ENCODE measurements at regions of chr20 and their contacts with region 1.

Region 1: DNA sequence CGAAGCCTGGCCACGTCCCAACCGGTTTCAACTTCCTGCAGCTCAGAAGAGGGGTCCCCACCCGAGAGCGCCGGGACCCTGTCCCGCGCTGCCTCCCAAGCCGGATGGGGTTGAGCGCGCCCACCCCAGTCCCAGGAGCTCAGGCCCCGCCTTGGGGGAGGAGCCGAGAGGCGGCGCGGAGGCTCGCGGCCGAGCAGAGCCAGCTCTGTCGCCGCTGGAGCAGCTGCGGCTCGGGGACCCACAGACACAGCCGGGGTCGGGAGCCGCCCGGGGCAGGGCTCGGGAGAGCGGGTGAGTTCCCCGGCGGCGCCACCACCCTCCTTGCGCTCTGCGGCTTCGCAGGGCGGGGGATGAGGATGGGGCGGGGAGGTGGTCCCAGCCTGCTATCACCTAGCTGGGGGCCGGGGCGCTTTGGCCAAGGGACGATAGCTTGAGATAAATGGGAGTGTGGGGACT is at the start of gene PPP1R16B:
- DNase-seq: peak; percentile 90
- H3K4me3 ChIP-seq: peak within 1 kb of the TSS; percentile 98
- H3K27ac ChIP-seq: peak within 1 kb of the TSS; percentile 79
- H3K4me1 ChIP-seq: peaks cover 51% of the 10 kb centered on the region
- CTCF ChIP-seq: no peak
- total RNA-seq, gene PPP1R16B: 44.3 and 49.7 TPM in 2 replicates

Region 2: GRCh38 chr20:38842558-38842981 is 37.0 kb after region 1 on chr20:
- CTCF ChIA-PET with region 1: interaction called, 3 read pairs
- POLR2A ChIA-PET with region 1: interaction called, 39 read pairs
- intact Hi-C with region 1: loop called (anchors 1 kb)
- DNase-seq: peak; percentile 96
- H3K4me3 ChIP-seq: peak overlapping the region; percentile 57
- H3K27ac ChIP-seq: peak overlapping the region; percentile 99
- H3K4me1 ChIP-seq: peaks cover 83% of the 10 kb centered on the region
- CTCF ChIP-seq: no peak

Region 3: DNA sequence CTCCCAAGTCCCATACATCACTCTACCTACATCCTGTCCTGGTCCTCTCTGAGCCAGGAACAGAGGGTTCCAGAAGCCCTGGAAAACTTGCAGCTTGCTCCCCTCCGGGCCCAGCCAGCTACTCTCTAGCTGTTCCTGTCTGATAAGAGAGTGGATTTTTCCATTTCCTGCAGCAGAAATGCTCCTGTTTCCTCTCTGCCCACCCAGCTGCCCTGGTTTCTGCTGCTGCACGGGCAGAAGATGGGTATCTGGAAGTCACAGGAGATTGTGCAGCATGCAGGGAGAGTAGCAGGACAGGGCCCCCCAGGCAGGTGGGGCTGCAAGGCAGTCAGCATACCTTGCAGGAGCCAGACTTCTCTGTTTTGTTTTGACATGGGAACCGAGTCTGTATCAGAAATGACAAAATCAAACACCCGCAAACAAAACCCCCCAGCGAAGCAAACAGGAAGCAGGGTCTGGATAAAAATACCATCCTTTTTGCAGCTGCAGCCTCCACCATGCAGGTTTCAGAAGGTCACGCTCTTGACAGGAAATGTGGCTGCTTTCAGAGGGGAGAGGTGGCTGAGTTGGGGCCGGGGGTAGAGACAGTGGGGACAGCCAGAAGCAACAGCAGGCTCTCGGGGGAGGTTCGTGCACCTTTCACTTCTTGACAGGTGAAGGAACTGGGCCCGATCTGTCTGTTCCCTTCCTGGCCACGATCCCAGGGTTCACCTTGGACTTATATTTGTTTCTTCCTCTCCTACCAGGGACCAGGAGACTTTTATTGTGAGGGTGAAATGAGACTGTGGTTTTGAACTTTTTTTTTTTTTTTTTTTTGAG is 69.9 kb after region 1 on chr20:
- CTCF ChIA-PET with region 1: interaction called, 4 read pairs
- POLR2A ChIA-PET with region 1: interaction called, 13 read pairs
- intact Hi-C with region 1: loop called (anchors 1 kb)
- DNase-seq: peak; percentile 97
- H3K4me3 ChIP-seq: peak overlapping the region; percentile 54
- H3K27ac ChIP-seq: peak overlapping the region; percentile 97
- H3K4me1 ChIP-seq: peaks cover 96% of the 10 kb centered on the region
- CTCF ChIP-seq: no peak; the same call in 1 of the 2 replicates

Region 4: DNA sequence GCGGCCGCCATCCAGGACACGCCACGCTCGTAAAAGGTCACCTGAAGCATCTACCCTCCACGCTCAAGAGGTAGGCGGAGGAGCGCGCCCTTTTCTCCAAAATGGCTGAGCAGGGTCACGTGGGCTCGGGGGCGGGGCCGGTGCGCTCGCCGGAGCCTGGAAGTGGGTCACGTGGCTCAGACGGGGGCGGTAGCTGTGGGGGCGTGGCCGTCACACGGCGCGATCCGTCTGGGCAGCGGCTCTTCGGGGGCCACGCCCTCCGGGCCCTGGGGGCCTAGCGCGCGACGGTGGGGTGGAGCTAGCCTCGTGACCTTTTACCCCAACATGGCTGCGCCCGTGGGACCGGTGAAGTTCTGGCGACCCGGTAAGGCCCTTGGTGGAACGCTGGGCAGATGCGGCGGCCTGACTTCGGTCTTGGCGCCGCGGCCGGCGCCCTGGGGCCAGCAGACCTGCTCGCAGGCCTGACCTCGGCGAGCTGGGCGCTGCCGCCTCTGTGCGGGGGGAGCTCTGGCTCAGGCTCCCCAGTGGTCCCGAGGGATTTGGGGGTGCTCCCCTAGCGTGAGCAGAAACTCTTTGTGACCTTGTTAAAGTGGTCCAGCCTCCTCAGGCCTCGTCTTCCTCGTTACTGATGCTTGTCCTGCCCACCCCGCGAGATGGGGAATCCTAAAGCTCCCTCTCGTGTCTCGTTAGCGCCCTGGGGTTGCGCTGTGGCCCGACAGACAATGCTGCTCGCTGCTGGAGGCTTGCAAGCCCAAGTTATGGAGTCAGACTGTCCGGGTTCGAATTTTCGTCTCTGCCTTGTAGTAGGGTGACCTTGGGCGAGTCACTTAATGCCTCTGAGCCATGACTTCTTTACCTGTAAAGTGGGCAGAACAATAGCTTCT is 156.8 kb after region 1 on chr20 and contains the start of gene DHX35:
- CTCF ChIA-PET with region 1: no interaction called
- POLR2A ChIA-PET with region 1: no interaction called
- intact Hi-C with region 1: loop called (anchors 5 kb)
- DNase-seq: peak; percentile 98
- H3K4me3 ChIP-seq: peak within 1 kb of the TSS; percentile 90
- H3K27ac ChIP-seq: peak within 1 kb of the TSS; percentile 80
- H3K4me1 ChIP-seq: peaks cover 22% of the 10 kb centered on the region
- CTCF ChIP-seq: peak; percentile 70
- total RNA-seq, gene DHX35: 13.7 and 15.6 TPM in 2 replicates